SK-N-SH (cell line): ENCODE measurements at regions of chr12 and their contacts with region 1.

Region 1: DNA sequence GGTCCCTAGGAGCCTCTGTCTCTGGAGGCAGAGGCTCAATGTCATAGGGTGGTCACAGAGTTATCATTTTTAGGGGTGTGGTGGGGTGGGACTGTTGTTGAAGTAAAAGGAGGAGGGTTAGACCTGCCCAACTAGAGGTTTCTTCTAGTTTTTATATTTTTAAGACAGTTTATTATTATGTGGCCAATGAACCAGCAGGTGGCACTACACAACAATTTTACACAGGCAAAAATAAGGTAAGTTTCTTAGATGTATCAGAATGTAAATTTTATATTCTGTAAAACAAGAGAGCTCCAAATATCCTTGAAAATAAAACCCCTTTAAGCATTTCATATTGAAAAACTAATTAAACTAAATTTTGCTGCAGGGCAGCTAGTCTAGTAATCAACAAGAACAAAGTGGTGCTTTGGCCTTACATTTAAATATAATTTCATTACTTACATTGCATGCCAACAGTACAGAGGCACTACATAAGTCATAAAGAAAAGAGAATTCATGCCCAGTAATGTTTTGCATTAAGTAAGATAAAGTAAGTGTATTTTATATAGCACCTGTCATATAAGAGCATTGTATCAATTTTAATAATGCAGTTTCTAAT is 22.2 kb upstream of the OVCH1 start:
- DNase-seq: peak; percentile 32
- H3K4me3 ChIP-seq: peak overlapping the region in 1 of 2 experiments; percentile 30; a peak in 1 of 4 replicates
- H3K27ac ChIP-seq: no peak overlapping the region; a peak in 1 of 4 replicates
- H3K4me1 ChIP-seq: no peaks in the 10 kb centered on the region; a peak in 1 of 4 replicates
- H3K27me3 ChIP-seq: no peaks in the 10 kb centered on the region
- CTCF ChIP-seq: peak; percentile 84
- EP300 ChIP-seq: no peak
- RAD21 ChIP-seq: peak; percentile 79

Region 2: DNA sequence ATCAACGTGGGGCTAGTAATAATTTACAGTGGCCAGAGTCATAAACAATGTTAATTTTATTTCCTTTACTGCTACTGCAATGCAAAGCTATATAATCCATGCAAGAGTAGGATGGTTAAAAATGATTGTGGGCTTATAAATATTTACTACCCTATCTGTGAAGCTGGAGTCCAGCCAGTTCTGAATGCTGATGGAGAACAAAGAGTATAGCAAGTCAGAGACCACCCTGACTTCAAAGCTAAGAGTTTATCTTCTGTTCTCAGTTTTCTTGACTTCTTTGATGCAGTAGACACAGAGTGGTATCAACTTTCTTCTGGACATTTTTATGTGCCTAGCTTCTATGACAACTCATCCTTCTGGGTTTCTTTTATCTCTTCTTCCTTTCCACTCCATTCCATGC is 11.8 kb after region 1 on chr12:
- CTCF ChIA-PET with region 1: interaction called, 30 read pairs
- POLR2A ChIA-PET with region 1: no interaction called
- DNase-seq: no peak
- H3K4me3 ChIP-seq: no peak overlapping the region
- H3K27ac ChIP-seq: no peak overlapping the region
- H3K4me1 ChIP-seq: no peaks in the 10 kb centered on the region; a peak in 1 of 4 replicates
- H3K27me3 ChIP-seq: no peaks in the 10 kb centered on the region
- CTCF ChIP-seq: no peak
- EP300 ChIP-seq: no peak
- RAD21 ChIP-seq: no peak